ENCODE measurements at regions of chr12 and their contacts with region 1.

Region 1: DNA sequence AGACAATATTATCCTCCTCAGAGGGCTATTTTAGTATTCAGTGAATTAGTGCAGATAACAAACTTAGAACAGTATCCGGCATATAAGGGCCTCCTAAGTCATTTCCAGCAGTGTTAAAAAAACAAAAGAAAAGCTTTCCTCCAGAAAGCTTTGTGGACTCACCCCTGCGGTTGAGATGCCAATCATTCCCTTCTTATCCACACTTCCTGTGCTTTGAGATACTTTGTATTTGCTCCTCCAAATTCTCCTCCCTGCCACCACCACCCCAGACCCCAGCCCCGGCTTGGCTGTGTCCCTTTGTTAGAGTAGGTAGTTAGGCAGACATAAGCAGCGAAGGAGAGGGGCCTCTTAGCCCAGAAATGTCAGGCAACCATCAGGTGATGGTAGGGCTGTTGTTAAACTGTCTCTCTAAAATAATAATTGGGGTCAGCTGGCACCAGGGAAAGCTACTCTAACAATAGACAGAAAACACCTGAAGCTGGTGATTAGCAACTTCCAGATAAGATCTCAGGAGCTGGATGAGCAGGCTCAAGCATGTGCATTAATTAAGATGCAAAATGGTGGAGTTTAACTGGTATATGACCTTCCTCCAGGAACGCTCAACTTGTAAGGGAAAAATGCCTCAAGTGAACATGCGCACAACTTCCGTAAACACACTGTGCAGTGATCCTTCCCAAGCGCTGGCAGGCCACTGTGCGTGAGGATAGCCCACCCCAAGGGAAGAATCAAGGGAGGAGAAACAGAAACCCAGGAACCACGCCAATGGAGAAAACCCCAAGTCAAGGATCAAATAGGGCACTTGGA is 152.1 kb upstream of the EEA1 start:
- DNase-seq: peak; percentile 74 to 86
- H3K4me3 ChIP-seq: no peak overlapping the region
- H3K4me3 Mint-ChIP-seq: peak overlapping the region; percentile 50
- H3K27ac Mint-ChIP-seq: peak overlapping the region; percentile 92
- H3K4me1 ChIP-seq: peaks cover 51% of the 10 kb centered on the region
- H3K4me1 Mint-ChIP-seq: peaks cover 36% of the 10 kb centered on the region
- H3K27me3 ChIP-seq: no peaks in the 10 kb centered on the region
- H3K27me3 Mint-ChIP-seq: no peaks in the 10 kb centered on the region
- CTCF ChIP-seq: no peak

Region 2: GRCh38 chr12:93042283-93042682 is 38.9 kb before region 1 on chr12:
- CTCF ChIA-PET with region 1: no interaction called
- POLR2A ChIA-PET with region 1: no interaction called
- intact Hi-C with region 1: loop called (anchors 1 kb)
- DNase-seq: peak; percentile 72 to 84
- H3K4me3 ChIP-seq: no peak overlapping the region
- H3K4me3 Mint-ChIP-seq: peak overlapping the region; percentile 37
- H3K27ac Mint-ChIP-seq: peak overlapping the region; percentile 87
- H3K4me1 ChIP-seq: peaks cover 46% of the 10 kb centered on the region
- H3K4me1 Mint-ChIP-seq: peaks cover 51% of the 10 kb centered on the region
- H3K27me3 ChIP-seq: no peaks in the 10 kb centered on the region
- H3K27me3 Mint-ChIP-seq: no peaks in the 10 kb centered on the region
- CTCF ChIP-seq: no peak

Region 3: GRCh38 chr12:93056971-93057535 is 24.1 kb before region 1 on chr12:
- CTCF ChIA-PET with region 1: interaction called, 4 read pairs
- POLR2A ChIA-PET with region 1: no interaction called
- intact Hi-C with region 1: loop called (anchors 2 kb)
- DNase-seq: peak in 1 of 2 experiments; percentile 25
- H3K4me3 ChIP-seq: no peak overlapping the region
- H3K4me3 Mint-ChIP-seq: peak overlapping the region; percentile 3
- H3K27ac Mint-ChIP-seq: peak overlapping the region; percentile 30
- H3K4me1 ChIP-seq: peaks cover 57% of the 10 kb centered on the region
- H3K4me1 Mint-ChIP-seq: peaks cover 49% of the 10 kb centered on the region
- H3K27me3 ChIP-seq: no peaks in the 10 kb centered on the region
- H3K27me3 Mint-ChIP-seq: no peaks in the 10 kb centered on the region
- CTCF ChIP-seq: no peak